ENCODE measurements at regions of chr13 and their contacts with region 1.

Region 1: GRCh38 chr13:34230271-34230670 is 412.3 kb downstream of the RFC3 start:
- DNase-seq: no peak
- ATAC-seq: no peak
- H3K4me3 Mint-ChIP-seq: no peak overlapping the region
- H3K27ac Mint-ChIP-seq: no peak overlapping the region
- H3K4me1 Mint-ChIP-seq: no peaks in the 10 kb centered on the region
- H3K27me3 Mint-ChIP-seq: no peaks in the 10 kb centered on the region

Region 2: DNA sequence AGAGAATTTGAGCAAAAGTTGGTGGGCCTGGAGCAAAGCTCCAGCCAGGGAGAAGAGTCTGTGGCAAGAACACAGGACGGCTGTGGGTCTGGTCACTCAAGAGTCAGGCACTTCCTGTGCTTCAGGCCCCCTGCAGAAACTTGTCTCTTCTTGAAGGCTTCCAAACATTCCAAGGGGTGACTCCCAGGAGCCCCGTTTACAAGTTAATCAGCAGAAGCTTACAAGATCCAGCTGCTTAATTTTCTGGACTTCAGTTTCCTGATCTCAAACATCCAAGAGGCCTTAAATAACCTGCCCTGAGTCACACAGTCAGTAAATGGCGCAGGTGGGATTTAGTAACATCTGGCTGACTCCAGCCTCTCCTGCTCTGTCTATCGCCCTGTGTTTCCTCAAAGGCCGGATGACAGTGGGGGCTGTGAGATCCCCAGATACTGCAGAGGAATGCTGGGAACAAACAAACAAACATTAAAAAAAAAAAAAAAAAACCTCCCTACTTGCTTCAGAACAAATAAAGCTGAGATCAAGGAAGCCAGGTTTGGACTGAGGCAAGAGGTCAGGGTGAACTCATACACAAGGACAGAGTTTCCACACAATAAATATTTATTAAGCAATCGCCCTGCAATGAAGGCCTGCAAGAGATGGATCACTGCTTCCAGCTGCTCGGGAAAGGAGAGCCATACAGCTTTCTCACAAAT is 587.8 kb before region 1 on chr13:
- CTCF ChIA-PET with region 1: no interaction called
- POLR2A ChIA-PET with region 1: no interaction called
- intact Hi-C with region 1: no loop called
- DNase-seq: no peak
- ATAC-seq: no peak
- H3K4me3 Mint-ChIP-seq: no peak overlapping the region
- H3K27ac Mint-ChIP-seq: no peak overlapping the region
- H3K4me1 Mint-ChIP-seq: peaks cover 55% of the 10 kb centered on the region
- H3K27me3 Mint-ChIP-seq: no peaks in the 10 kb centered on the region

Region 3: GRCh38 chr13:34277936-34278335 is 47.7 kb after region 1 on chr13:
- CTCF ChIA-PET with region 1: no interaction called
- POLR2A ChIA-PET with region 1: no interaction called
- intact Hi-C with region 1: loop called in 1 of 2 experiments (anchors 1 kb)
- DNase-seq: no peak
- ATAC-seq: no peak
- H3K4me3 Mint-ChIP-seq: no peak overlapping the region
- H3K27ac Mint-ChIP-seq: no peak overlapping the region
- H3K4me1 Mint-ChIP-seq: no peaks in the 10 kb centered on the region
- H3K27me3 Mint-ChIP-seq: peaks cover 2% of the 10 kb centered on the region

Measured in activated CD4-positive, alpha-beta T cell treated with anti-CD3 and anti-CD28 coated beads for 36 hours (primary cell).